Cardiac septum (tissue), 1 donor: ENCODE measurements at regions of chr12 and their contacts with region 1.

Region 1: GRCh38 chr12:6613776-6614512 is 6.8 kb upstream of the CHD4 start:
- DNase-seq: peak; percentile 92

Region 2: DNA sequence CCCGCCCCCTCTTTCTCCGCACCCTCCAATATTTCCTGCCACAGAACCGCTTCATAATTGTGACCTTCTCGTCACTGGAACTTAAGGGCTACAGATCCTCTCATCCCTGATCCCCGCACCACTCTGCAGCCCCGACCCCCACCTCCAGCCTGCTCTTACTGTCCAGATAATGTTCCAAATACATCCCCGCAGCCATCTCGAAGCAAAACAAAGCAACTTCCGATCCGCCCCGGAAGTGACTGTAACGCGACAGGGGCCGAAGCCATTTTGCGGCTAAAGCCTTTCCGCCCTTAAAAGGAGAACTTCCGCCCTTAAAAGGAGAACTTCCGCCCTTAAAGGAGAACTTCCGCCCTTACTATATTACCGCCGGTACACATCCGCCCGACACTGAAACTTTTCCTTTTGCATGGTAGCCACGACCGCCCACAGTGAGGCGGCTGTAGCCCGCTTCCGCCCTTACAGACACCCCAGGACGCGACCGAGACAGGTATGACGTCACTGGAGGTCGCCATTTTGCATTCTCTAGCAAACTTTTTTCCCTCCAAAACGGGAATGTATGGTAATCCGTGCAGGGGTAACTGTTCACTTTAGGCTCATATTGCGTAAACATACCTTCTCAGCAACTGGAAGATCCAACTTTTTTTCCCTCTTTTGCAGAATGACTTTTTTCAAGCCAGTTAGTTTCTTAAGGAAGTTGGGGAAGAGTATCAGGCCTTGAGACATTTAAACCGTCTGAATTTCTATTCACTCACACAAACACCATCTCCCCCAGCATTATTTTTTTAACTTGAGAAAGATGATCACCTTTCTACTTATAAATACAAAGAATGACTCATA is 49.2 kb after region 1 on chr12 and contains the start of gene ING4:
- intact Hi-C with region 1: loop called (anchors 5 kb)
- DNase-seq: peak; percentile 99
- total RNA-seq, gene ING4: 20.6 TPM

Region 3: DNA sequence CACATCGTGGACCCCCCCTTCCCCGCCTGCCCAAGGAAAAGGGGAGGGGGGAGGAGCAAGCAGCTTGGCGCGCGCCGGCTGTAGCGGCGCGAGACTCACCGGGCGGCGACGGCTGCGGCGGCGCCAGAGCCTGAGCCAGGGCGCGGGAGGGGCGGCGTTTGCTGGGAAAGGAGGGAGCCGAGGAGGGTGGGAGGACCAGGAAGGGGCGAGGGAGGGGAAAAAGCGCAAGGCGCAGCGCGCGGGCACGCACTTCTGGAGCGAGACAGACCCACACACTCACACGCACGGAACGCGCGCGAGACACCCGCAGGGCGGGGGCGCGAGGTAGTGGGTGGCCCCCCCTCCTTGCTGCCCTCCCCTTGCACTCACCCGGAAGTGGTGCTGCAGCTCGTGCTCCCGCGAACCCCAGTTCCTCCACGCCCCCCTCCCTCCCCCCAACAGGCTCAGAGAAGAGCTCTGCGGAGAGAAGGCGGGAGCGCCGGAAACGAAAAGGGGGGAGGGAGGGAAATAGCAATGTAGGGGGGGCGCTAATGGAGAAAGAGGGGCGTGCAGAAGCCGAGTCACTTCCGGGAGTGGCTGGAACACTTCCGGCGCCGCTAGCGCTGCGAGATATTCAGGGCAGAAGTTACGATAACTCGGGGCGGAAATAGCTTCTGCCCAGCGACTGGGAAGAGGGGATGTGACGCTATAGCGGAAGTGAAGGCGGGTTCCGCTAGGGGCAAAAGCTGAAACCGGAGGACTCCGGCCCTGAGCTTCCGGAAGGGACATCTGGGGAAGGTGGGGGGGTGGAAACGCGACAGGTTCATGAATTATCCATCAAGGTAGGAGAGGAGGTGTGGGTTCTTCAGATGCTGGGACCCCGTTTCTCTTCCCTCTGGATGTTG is 75.3 kb after region 1 on chr12 and contains the start of gene ZNF384:
- intact Hi-C with region 1: loop called (anchors 5 kb)
- DNase-seq: peak; percentile 99
- total RNA-seq, gene ZNF384: 32.7 TPM

Region 4: DNA sequence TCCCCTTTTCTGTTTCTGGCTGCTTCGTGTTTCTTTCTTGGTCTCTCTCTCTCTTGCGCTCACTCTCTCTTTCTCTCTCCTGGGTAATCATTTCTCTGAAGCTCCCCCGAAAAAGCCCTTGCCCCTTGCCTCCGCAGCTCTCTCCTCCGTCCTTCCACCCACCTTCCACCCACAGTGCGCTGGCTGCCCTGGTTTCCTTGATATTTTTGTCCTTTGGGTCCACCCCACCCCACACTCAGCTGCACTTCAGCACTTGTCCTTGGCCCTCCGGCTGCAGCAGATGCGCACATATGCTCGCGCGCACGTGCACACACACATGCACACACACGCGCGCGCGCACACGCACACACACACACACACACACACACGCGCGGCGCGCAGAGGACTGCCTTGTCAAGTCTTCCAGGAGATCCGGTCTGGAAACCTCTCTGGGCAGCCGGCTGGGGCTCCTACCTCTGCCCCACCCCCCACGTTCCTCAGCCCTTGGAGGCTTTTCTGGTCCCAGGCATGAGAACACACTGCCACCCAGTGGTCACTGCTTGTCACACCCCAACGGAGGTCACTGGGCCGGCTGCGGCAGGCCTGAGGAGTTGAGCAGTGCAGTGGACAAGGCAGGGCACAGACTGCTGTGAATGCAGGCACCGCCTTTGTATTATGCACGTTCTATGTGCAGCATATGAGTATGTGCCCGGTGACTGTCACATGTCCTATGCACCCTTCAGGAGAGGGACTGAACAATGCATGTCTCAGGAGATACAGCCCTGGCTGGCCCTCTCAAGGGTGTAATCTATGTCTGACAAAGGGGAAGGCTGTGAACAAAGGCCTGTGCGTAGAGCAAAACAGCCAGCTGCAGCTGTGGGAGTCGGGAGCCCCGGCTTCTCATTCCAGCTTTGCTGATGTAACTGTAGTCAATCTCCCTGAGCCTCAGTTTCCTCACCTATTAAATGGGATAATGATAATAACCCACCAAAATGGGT is 164.9 kb after region 1 on chr12:
- intact Hi-C with region 1: loop called (anchors 5 kb)
- DNase-seq: peak; percentile 96

Region 5: DNA sequence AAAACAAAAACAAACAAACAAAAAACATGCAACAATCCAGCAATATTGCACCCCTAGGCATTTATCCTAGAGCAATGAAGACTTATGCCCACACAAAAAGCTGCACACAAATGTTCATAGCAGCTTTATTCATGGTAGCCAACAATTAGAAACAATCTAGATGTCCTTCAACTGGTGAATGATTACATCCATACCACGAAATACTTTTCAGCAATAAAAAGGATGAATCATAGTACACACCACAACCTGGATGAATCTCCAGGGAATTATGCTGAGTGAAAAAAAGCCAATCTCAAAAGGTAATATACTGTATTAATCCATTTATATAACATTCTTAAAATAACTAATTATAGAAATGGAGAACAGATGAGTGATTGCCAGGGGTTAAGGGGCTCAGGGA is 193.2 kb after region 1 on chr12:
- intact Hi-C with region 1: no loop called
- DNase-seq: no peak

Region 6: GRCh38 chr12:6825398-6826124 is 211.6 kb after region 1 on chr12:
- intact Hi-C with region 1: loop called (anchors 5 kb)
- DNase-seq: peak; percentile 93